ENCODE measurements at regions of chr3 and their contacts with region 1.

Region 1: DNA sequence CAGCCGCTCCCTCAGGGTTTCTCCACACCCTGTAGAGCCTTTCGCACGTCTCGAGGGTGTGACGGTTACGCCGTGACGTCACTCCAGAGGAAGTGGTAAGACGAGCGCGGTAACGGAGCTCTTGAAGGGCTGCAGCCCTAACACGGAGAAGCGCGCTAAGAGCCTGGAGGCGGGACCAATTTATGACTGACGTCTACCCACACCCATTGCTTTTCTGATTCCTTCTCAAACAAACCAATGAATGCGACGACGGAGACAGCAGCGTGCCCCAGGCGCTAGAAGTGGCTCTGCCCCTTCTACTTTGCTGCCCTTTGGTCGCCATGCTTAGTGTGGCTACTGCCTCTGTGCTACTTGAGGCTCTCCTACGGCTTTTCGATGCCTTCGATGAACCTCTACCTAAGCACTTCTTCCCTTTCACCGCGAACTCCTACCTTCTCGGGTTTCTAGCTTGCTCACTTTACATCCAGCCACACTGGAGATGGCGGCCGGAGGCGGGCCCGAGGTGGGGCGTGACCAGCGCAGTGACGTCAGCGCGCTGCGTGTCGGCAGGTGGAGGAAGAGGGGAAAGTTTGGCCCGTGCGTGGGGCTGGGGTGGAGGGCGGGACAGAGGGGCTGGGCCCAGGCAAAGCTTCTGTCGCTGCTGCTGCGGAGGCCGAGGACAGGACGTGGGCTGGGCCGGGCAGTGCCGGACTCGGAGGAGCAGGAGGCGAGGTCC is at the start of gene OXSR1:
- DNase-seq: peak; percentile 98
- ATAC-seq: peak; percentile 94
- H3K4me3 Mint-ChIP-seq: peak within 1 kb of the TSS; percentile 92
- H3K27ac Mint-ChIP-seq: peak within 1 kb of the TSS; percentile 99
- H3K4me1 Mint-ChIP-seq: peaks cover 40% of the 10 kb centered on the region
- H3K27me3 Mint-ChIP-seq: no peaks in the 10 kb centered on the region
- total RNA-seq, gene OXSR1: 53.7 to 56.0 TPM

Region 2: GRCh38 chr3:37862903-37863815 is 302.0 kb before region 1 on chr3:
- CTCF ChIA-PET with region 1: no interaction called
- POLR2A ChIA-PET with region 1: no interaction called
- intact Hi-C with region 1: no loop called
- DNase-seq: no peak
- ATAC-seq: no peak
- H3K4me3 Mint-ChIP-seq: peak overlapping the region; percentile 73
- H3K27ac Mint-ChIP-seq: no peak overlapping the region
- H3K4me1 Mint-ChIP-seq: peaks cover 23% of the 10 kb centered on the region
- H3K27me3 Mint-ChIP-seq: peaks cover 5% of the 10 kb centered on the region

Region 3: GRCh38 chr3:37996785-37997301 is 168.3 kb before region 1 on chr3:
- CTCF ChIA-PET with region 1: interaction called, 3 read pairs
- POLR2A ChIA-PET with region 1: interaction called, 4 read pairs
- intact Hi-C with region 1: loop called in 1 of 2 experiments (anchors 1 kb)
- DNase-seq: peak; percentile 92
- ATAC-seq: peak; percentile 57
- H3K4me3 Mint-ChIP-seq: no peak overlapping the region
- H3K27ac Mint-ChIP-seq: peak overlapping the region; percentile 96
- H3K4me1 Mint-ChIP-seq: peaks cover 49% of the 10 kb centered on the region
- H3K27me3 Mint-ChIP-seq: no peaks in the 10 kb centered on the region

Region 4: DNA sequence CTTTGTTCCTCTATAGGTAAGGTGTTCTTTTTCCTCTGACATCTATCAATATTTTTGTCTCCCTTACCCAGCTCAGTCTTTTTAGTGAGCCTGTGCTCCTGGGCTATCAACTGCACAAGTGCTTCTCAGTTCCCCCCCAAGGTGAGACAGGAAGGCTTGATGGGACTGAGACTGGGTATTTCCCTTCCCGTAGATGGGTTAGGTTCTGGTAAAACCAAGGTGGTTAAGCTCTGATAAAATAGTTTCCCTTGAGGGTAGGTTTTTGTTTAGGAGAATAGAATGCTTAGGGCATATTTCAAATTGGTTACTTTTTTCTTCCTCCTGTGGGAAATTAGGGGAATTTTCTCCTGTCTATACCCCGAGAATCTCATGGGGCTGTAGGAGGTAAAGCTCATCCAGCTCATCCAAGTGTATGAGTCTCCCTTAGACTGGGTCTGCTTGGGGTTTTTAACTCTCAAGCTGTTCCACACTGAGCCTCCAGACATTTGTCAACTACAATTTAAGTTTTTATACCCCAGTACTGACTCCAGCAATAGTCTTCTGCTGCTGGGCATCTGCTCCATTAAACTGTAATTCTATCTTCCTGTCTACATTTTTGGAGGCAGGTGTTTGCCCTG is 45.1 kb after region 1 on chr3:
- CTCF ChIA-PET with region 1: interaction called, 5 read pairs
- POLR2A ChIA-PET with region 1: no interaction called
- intact Hi-C with region 1: loop called in 1 of 2 experiments (anchors 2 kb)
- DNase-seq: peak; percentile 14
- ATAC-seq: peak; percentile 33
- H3K4me3 Mint-ChIP-seq: no peak overlapping the region
- H3K27ac Mint-ChIP-seq: peak overlapping the region; percentile 29
- H3K4me1 Mint-ChIP-seq: peaks cover 65% of the 10 kb centered on the region
- H3K27me3 Mint-ChIP-seq: no peaks in the 10 kb centered on the region

Region 5: DNA sequence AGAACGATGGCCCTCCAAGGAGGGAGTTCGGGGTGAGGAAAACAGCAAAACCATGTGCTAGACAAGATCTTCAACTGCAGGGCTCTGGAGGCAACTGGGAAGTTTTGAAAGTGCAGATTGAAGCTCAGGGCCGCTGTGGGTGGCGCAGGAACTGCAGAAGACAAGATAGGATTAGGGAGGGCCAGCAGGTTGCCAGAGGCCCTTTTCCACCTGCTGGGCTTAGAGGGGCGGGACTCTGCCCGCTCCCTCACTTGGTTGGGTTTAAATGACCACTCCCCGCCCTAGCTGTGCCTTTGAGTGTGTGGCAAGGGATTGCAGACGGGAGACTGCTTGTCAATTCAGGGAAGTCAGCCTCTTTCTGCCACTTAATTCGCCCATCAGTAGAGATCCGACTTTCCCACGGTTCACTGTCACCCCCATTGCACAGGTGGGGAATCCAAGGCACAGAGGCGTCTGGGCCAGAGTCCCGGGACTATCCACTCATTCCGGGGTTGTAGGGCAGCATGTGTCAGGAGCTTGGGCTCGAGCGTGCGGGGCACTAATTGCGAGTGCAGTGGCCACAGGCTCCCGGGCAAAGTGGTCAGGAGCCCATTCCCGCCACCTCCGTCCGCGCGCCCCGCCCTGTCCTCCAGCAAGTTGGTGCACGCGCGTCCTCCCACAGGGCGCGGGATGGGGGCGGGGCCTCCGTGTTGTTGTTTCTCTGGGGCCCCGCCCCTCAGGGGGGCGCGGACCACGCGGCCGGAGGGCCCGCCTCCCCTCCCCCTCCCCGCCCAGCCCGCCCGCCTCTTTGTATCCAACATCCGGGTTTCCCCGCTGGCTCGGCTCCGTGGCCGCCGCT is 288.2 kb after region 1 on chr3 and contains the start of gene ACVR2B:
- CTCF ChIA-PET with region 1: no interaction called
- POLR2A ChIA-PET with region 1: no interaction called
- intact Hi-C with region 1: loop called in 1 of 2 experiments (anchors 1 kb)
- DNase-seq: peak; percentile 85
- ATAC-seq: peak; percentile 71
- H3K4me3 Mint-ChIP-seq: peak within 1 kb of the TSS; percentile 87
- H3K27ac Mint-ChIP-seq: peak within 1 kb of the TSS; percentile 81
- H3K4me1 Mint-ChIP-seq: peaks cover 9% of the 10 kb centered on the region
- H3K27me3 Mint-ChIP-seq: peaks cover 2% of the 10 kb centered on the region
- total RNA-seq, gene ACVR2B: 5.7 to 6.9 TPM

Region 6: GRCh38 chr3:39051647-39052561 is 886.8 kb after region 1 on chr3 and contains the starts of genes SCN11A and WDR48:
- CTCF ChIA-PET with region 1: no interaction called
- POLR2A ChIA-PET with region 1: no interaction called
- intact Hi-C with region 1: loop called in 1 of 2 experiments (anchors 5 kb)
- DNase-seq: peak; percentile 96
- ATAC-seq: peak; percentile 97
- H3K4me3 Mint-ChIP-seq: peak within 1 kb of the TSS; percentile 87
- H3K27ac Mint-ChIP-seq: peak within 1 kb of the TSS; percentile 97
- H3K4me1 Mint-ChIP-seq: peaks cover 45% of the 10 kb centered on the region
- H3K27me3 Mint-ChIP-seq: no peaks in the 10 kb centered on the region
- total RNA-seq, gene SCN11A: 0.07 to 0.09 TPM
- total RNA-seq, gene WDR48: 33.3 to 36.5 TPM

Region 7: GRCh38 chr3:39406368-39407258 is 1241.5 kb after region 1 on chr3 and contains the start of gene RPSA:
- CTCF ChIA-PET with region 1: no interaction called
- POLR2A ChIA-PET with region 1: no interaction called
- intact Hi-C with region 1: loop called in 1 of 2 experiments (anchors 1 kb)
- DNase-seq: peak; percentile 98
- ATAC-seq: peak; percentile 93
- H3K4me3 Mint-ChIP-seq: peak within 1 kb of the TSS; percentile 98
- H3K27ac Mint-ChIP-seq: peak within 1 kb of the TSS; percentile 98
- H3K4me1 Mint-ChIP-seq: peaks cover 39% of the 10 kb centered on the region
- H3K27me3 Mint-ChIP-seq: no peaks in the 10 kb centered on the region
- total RNA-seq, gene RPSA: 2,498 to 3,023 TPM

Measured in activated CD4-positive, alpha-beta T cell treated with anti-CD3 and anti-CD28 coated beads for 36 hours (primary cell).